Common myeloid progenitor, CD34-positive (primary cell): ENCODE measurements at regions of chr17 and their contacts with region 1.

Region 1: GRCh38 chr17:45135192-45135977 is at the start of gene ACBD4:
- DNase-seq: peak; percentile 97 to 98 (median 97)
- H3K4me3 ChIP-seq: peak within 1 kb of the TSS; percentile 75 to 93 (median 84)
- H3K27ac ChIP-seq: peak within 1 kb of the TSS; percentile 33 to 77
- H3K4me1 ChIP-seq: peaks cover 0 to 28% (median 28%) of the 10 kb centered on the region in 4 experiments
- H3K27me3 ChIP-seq: peaks cover 0 to 1% (median 0%) of the 10 kb centered on the region in 5 experiments

Region 2: GRCh38 chr17:45115871-45116724 is 19.3 kb before region 1 on chr17:
- CTCF ChIA-PET with region 1: interaction called, 11 read pairs
- POLR2A ChIA-PET with region 1: no interaction called
- DNase-seq: no peak
- H3K4me3 ChIP-seq: no peak overlapping the region
- H3K27ac ChIP-seq: no peak overlapping the region
- H3K4me1 ChIP-seq: peaks cover 0 to 3% (median 1%) of the 10 kb centered on the region in 4 experiments
- H3K27me3 ChIP-seq: peaks cover 0 to 20% (median 6%) of the 10 kb centered on the region in 5 experiments

Region 3: DNA sequence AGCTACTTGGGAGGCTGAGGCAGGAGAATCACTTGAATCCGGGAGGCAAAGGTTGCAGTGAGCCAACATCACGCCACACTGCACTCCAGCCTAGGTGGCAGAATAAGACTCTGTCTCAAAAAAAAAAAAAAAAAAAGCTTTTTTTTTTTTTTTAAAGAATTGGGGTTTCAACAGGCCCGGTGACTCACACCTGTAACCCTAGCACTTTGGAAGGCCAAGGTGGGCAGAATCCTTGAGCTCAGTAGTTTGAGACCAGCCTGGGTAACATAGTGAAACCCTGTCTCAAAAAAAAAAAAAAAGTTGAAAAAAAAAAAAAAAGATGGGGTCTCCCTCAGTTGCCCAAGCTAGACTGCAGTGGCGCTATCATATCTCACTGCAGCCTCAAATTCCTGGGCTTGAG is 19.6 kb after region 1 on chr17:
- CTCF ChIA-PET with region 1: interaction called, 148 read pairs
- POLR2A ChIA-PET with region 1: interaction called, 34 read pairs
- DNase-seq: peak in 1 of 3 donors; percentile 38
- H3K4me3 ChIP-seq: no peak overlapping the region
- H3K27ac ChIP-seq: no peak overlapping the region
- H3K4me1 ChIP-seq: peaks cover 23 to 51% (median 42%) of the 10 kb centered on the region in 4 experiments
- H3K27me3 ChIP-seq: no peaks in the 10 kb centered on the region

Region 4: GRCh38 chr17:45172454-45173286 is 37.3 kb after region 1 on chr17:
- CTCF ChIA-PET with region 1: interaction called, 11 read pairs
- POLR2A ChIA-PET with region 1: no interaction called
- DNase-seq: peak; percentile 36 to 73 (median 65)
- H3K4me3 ChIP-seq: peak overlapping the region; percentile 20 to 71 (median 56)
- H3K27ac ChIP-seq: peak overlapping the region in 1 of 2 experiments; percentile 25
- H3K4me1 ChIP-seq: peaks cover 0 to 44% (median 40%) of the 10 kb centered on the region in 4 experiments
- H3K27me3 ChIP-seq: no peaks in the 10 kb centered on the region

Region 5: DNA sequence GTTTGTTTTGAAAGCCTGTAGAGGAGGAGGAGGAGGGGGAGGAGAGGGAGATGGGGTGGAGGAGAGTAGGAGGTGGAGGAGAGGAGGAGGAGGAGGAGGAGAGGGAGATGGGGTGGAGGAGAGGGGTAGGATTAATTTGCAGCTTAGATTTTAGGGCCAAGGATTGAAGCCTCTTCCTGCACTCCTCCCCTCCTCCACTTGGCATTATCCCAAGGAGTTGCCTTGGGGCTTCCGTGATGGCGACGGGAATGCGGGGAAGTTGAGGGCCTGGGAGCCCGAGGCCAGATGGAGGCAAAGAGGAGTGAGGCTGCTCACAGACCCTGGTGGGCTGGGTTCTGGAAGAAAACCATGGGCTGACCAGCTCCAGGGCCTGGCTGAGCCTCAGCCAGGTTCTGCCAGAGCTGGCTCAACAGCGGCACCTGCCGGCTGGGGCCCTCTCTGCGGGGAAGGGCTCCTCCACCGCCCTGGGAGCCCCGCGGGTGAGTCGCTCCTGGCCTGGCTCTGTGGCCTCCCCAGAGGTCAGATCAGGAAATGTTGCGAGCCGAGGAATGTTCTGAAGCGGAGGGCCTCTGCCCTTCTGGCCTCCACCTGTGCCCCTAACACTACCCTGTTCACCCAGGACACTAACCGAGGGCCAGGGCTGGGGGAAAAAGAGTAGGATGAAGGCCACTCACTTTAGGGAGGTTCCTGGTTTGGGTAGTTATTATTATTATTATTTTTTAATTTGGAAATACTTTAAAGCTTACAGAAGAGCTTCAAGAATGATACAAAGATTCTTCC is 62.4 kb after region 1 on chr17:
- CTCF ChIA-PET with region 1: interaction called, 56 read pairs
- POLR2A ChIA-PET with region 1: interaction called, 4 read pairs
- DNase-seq: peak; percentile 85 to 87 (median 87)
- H3K4me3 ChIP-seq: peak overlapping the region in 3 of 7 experiments; percentile 2 to 34 (median 16)
- H3K27ac ChIP-seq: no peak overlapping the region
- H3K4me1 ChIP-seq: peaks cover 0 to 20% (median 10%) of the 10 kb centered on the region in 4 experiments
- H3K27me3 ChIP-seq: no peaks in the 10 kb centered on the region